Activated CD8-positive, alpha-beta T cell treated with anti-CD3 and anti-CD28 coated beads, Interleukin-2, amount 10 ng/mL, durations not matched to agents 7 days and 5 days (primary cell): ENCODE measurements at regions of chr3 and their contacts with region 1.

Region 1: GRCh38 chr3:170908235-170909116 is at the start of gene EIF5A2:
- DNase-seq: peak; percentile 97
- ATAC-seq: peak; percentile 97
- H3K4me3 Mint-ChIP-seq: peak within 1 kb of the TSS; percentile 96
- H3K27ac Mint-ChIP-seq: peak within 1 kb of the TSS; percentile 97
- H3K4me1 Mint-ChIP-seq: peaks cover 27% of the 10 kb centered on the region
- H3K27me3 Mint-ChIP-seq: peaks cover 16% of the 10 kb centered on the region
- total RNA-seq, gene EIF5A2: 10.8 to 10.9 TPM

Region 2: GRCh38 chr3:170869645-170870593 is 38.6 kb before region 1 on chr3 and contains the start of gene RPL22L1:
- CTCF ChIA-PET with region 1: interaction called, 3 read pairs
- POLR2A ChIA-PET with region 1: interaction called, 31 read pairs
- DNase-seq: peak; percentile 96
- ATAC-seq: peak; percentile 93
- H3K4me3 Mint-ChIP-seq: peak within 1 kb of the TSS; percentile 85
- H3K27ac Mint-ChIP-seq: peak within 1 kb of the TSS; percentile 95
- H3K4me1 Mint-ChIP-seq: peaks cover 26% of the 10 kb centered on the region
- H3K27me3 Mint-ChIP-seq: no peaks in the 10 kb centered on the region
- total RNA-seq, gene RPL22L1: 80.3 to 89.3 TPM

Region 3: DNA sequence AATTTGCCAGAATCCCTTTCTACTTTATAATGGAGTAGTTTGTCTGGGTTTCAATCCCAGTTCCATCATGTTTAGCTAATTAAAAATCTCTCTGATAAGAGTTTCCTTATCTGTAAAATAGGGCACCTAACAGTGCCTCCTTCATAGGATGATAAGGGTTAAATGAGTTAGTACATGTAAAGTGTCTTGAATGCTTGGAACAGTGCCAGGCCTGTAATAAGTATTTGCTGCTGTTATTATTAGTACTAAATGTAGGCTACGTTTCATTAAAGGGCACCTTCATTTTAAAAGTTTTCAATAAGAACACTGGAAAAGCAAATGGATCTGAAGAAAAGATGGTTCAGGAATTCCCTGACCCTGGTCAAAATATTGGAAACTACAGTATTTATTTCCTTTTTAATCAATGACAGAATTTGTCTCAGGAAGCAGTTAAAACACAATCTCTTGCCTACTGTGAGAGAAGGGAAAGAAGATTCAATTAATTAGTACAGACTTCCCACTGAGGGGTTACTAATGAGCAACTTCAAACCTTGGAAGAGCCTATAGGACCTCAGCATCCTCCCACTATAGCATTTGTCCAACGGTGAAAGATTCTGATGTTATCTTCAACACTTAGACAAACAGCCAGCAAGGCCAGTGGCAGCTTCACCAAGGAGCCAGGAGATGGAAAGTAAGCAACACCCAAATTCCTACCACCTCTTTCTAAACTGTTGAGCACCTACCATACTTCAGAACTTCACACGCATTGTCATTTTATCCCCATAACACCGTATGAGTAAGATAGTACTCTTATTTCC is 130.1 kb after region 1 on chr3:
- CTCF ChIA-PET with region 1: no interaction called
- POLR2A ChIA-PET with region 1: no interaction called
- DNase-seq: no peak
- ATAC-seq: no peak
- H3K4me3 Mint-ChIP-seq: no peak overlapping the region
- H3K27ac Mint-ChIP-seq: no peak overlapping the region
- H3K4me1 Mint-ChIP-seq: no peaks in the 10 kb centered on the region
- H3K27me3 Mint-ChIP-seq: peaks cover 42% of the 10 kb centered on the region